IMR-90 (cell line): ENCODE measurements at regions of chr18 and their contacts with region 1.

Region 1: GRCh38 chr18:31977270-31977872 is 34.4 kb upstream of the TRAPPC8 start:
- DNase-seq: peak; percentile 54
- ATAC-seq: peak; percentile 72; the same call in 1 of the 2 replicates
- H3K4me3 ChIP-seq: no peak overlapping the region
- H3K27ac ChIP-seq: no peak overlapping the region
- H3K4me1 ChIP-seq: no peaks in the 10 kb centered on the region
- H3K27me3 ChIP-seq: no peaks in the 10 kb centered on the region
- CTCF ChIP-seq: peak; percentile 74
- POLR2A ChIP-seq: no peak
- RAD21 ChIP-seq: peak; percentile 80

Region 2: GRCh38 chr18:31819106-31819924 is 158.1 kb before region 1 on chr18:
- CTCF ChIA-PET with region 1: no interaction called
- POLR2A ChIA-PET with region 1: no interaction called
- dilution Hi-C with region 1: no loop called
- in situ Hi-C with region 1: no loop called
- intact Hi-C with region 1: loop called (anchors 5 kb)
- DNase-seq: peak; percentile 52
- ATAC-seq: peak; percentile 92
- H3K4me3 ChIP-seq: no peak overlapping the region
- H3K27ac ChIP-seq: no peak overlapping the region
- H3K4me1 ChIP-seq: no peaks in the 10 kb centered on the region
- H3K27me3 ChIP-seq: no peaks in the 10 kb centered on the region
- CTCF ChIP-seq: peak; percentile 73
- POLR2A ChIP-seq: no peak
- RAD21 ChIP-seq: peak; percentile 56

Region 3: GRCh38 chr18:32530947-32531651 is 553.7 kb after region 1 on chr18:
- CTCF ChIA-PET with region 1: no interaction called
- POLR2A ChIA-PET with region 1: no interaction called
- dilution Hi-C with region 1: no loop called
- in situ Hi-C with region 1: no loop called
- intact Hi-C with region 1: no loop called
- DNase-seq: peak; percentile 36
- ATAC-seq: no peak
- H3K4me3 ChIP-seq: no peak overlapping the region
- H3K27ac ChIP-seq: no peak overlapping the region
- H3K4me1 ChIP-seq: no peaks in the 10 kb centered on the region
- H3K27me3 ChIP-seq: no peaks in the 10 kb centered on the region
- CTCF ChIP-seq: no peak
- POLR2A ChIP-seq: no peak
- RAD21 ChIP-seq: no peak